ENCODE measurements at regions of chr22 and their contacts with region 1.

Region 1: DNA sequence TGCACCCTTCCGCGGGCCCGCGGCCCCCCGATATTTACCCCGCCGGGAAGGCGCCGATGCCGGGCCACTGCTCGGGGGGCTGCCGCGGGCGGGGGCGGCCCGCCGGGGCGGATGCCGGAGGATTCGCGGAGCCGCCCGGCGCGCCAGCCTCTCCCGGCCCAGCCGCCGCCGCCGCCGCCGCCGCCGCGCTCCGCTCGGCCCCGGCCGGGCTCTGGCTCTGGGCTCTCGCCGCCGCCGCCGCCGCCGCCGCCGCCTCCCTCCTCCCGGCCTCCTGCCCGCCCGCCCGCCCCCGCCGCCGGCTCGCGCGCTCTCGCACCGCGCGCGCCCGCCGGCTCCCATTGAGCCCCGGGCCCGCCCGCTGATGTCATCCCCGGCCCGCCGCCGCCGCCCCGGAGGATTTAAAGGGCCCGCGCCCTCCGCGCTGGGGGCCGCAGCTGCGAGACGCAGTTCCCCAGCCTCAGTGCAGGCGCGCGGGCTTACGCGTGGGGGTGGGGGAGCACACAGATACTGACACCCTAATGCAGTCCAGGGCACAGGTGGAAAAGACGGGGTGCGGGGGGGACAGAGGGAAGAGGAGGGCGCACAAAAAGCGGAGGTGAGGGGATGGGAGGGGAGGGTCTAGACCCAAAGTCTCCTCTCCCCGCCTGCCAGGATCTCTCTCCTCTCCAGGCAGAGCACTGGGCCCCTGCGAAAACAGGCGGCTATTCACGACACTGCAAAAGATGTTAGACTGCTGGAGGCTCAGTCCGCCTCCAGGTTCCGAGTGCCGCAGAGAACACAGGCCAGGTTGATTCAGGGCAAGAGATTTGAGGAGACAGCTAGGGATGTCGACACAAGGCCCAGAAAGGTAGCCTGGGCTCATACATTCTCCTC is at the start of gene CSNK1E:
- DNase-seq: peak; percentile 79
- H3K4me3 ChIP-seq: peak within 1 kb of the TSS; percentile 82
- H3K27ac ChIP-seq: peak within 1 kb of the TSS; percentile 77
- H3K4me1 ChIP-seq: peaks cover 45% of the 10 kb centered on the region
- CTCF ChIP-seq: no peak
- total RNA-seq, gene CSNK1E: 152 and 182 TPM in 2 replicates

Region 2: DNA sequence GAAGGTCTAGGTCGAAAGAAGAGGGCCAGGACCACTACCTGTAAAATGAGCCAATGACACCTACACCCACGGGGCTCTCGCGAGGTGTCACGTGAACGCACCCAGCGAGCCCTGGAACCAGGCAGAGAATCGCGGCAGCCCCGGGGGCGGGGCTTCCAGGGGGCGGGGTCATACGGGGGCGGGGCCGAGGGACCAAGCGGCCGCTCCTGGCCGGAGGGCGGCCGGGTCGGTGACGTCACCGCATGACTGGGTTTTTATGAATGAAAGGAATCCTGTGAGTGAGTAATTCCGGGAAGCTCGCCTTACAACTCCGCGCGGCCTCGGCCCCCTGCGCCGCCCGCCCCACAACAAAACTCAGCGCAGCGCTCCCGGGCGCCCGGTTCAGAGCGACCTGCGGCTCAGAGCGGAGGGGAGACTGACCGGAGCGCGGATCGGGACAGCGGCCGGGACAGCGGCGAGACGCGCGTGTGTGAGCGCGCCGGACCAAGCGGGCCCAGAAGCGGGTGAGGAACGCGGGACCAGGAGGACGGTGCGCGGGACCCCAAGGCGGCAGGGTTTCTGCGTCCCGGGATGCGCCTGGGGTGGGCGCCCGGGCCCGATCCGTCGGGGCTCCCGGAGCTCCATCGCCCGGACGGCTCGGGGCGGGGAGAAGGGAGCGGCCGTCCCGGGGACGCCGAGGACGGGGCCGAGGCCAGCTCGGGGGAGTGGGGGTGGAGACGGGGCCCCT is 115.5 kb before region 1 on chr22 and contains the start of gene MAFF:
- CTCF ChIA-PET with region 1: no interaction called
- POLR2A ChIA-PET with region 1: interaction called, 5 read pairs
- intact Hi-C with region 1: loop called (anchors 5 kb)
- DNase-seq: peak; percentile 94
- H3K4me3 ChIP-seq: peak within 1 kb of the TSS; percentile 79
- H3K27ac ChIP-seq: peak within 1 kb of the TSS; percentile 18
- H3K4me1 ChIP-seq: peaks cover 47% of the 10 kb centered on the region
- CTCF ChIP-seq: no peak
- total RNA-seq, gene MAFF: 3.8 and 5.7 TPM in 2 replicates

Region 3: DNA sequence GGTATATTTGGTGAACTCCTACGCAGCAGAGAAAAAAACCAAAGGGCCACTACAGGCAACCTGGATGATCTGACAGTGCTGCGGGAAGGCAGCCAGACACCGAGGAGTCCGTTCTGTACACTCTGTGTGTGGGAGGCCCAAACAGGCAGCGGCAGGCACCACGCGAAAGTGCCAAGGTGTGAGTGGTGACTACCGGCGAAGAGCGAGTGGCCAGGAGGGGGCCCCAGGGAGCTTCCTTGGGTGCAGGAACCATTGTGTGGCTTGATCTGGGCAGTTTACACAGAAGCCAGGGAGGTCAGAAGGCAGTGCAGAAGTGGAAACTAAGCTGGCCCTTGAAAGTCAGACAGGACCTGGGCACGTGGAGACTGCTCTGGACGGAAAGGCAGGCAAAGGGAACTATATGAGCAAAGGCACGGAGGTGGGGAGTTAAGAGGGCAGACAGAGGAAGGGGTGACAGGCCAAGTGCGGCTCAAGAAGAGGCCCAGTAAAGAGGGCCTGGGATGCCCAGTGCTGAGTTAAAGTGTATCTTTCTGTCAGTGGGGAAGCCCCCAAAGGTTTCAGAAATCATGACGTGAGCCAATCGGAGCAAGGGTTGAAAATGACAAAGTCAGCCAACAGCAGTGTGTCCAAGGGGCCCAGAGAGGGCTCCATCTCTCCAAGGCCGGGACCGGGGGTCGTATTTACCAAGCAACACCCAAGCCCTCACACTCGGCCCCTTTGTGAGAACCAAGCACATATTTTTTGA is 55.1 kb before region 1 on chr22:
- CTCF ChIA-PET with region 1: no interaction called
- POLR2A ChIA-PET with region 1: no interaction called
- intact Hi-C with region 1: loop called (anchors 5 kb)
- DNase-seq: peak; percentile 64
- H3K4me3 ChIP-seq: no peak overlapping the region
- H3K27ac ChIP-seq: peak overlapping the region; percentile 29
- H3K4me1 ChIP-seq: peaks cover 67% of the 10 kb centered on the region
- CTCF ChIP-seq: peak; percentile 86

Region 4: GRCh38 chr22:38272373-38273134 is 44.8 kb before region 1 on chr22 and contains the start of gene TMEM184B:
- CTCF ChIA-PET with region 1: no interaction called
- POLR2A ChIA-PET with region 1: no interaction called
- intact Hi-C with region 1: loop called (anchors 1 kb)
- DNase-seq: peak; percentile 83
- H3K4me3 ChIP-seq: peak within 1 kb of the TSS; percentile 87
- H3K27ac ChIP-seq: peak within 1 kb of the TSS; percentile 49
- H3K4me1 ChIP-seq: peaks cover 75% of the 10 kb centered on the region
- CTCF ChIP-seq: no peak
- total RNA-seq, gene TMEM184B: 11.1 and 19.1 TPM in 2 replicates

Region 5: DNA sequence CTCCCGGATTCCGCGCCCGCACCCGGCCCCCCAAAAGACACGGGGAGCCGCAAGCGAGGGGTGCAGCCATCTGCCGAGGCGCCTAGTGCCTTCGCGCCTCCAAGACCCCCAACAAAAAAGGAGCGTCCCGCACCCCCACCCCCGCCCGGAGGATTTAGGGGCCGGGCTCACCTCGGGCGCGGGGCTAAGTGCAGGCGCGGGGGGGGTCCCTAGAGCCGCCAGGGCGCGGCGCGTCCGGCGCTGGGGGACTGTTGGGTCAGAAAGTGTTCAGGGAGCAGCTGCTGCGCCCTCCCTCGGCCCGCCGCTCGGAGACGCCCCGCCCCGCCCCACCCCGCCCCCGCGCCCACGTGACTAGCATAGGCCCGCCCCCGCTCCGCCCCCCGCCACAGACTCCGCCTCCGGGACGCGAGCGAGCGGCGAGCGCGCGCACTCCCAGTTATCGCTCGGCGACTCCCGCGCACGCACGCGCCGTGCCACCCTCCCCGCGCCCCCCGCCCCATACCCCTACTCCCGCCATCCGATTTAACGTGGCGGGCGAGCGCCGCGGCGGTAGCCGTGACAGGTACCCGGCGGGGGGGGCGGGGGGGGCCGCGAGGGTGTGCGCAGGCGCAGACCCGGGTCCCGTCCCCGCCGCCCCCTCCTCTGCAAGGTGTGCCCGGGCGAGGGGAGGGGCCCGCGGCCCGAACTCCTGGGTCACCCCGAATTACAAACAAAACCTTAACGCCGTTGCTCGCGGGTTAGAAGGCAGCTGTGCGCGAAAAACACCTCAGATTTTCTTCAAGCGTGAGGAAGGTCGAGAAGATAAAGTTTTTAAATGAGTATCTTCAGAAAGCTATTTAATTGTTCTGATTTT is 81.5 kb after region 1 on chr22:
- CTCF ChIA-PET with region 1: no interaction called
- POLR2A ChIA-PET with region 1: no interaction called
- intact Hi-C with region 1: loop called (anchors 5 kb)
- DNase-seq: peak; percentile 89
- H3K4me3 ChIP-seq: peak overlapping the region; percentile 87
- H3K27ac ChIP-seq: peak overlapping the region; percentile 90
- H3K4me1 ChIP-seq: peaks cover 28% of the 10 kb centered on the region
- CTCF ChIP-seq: no peak

Measured in OCI-LY7 (cell line).